BJ (cell line): ENCODE measurements at regions of chr22 and their contacts with region 1.

Region 1: GRCh38 chr22:38214256-38215056 is 12.7 kb downstream of the MAFF start:
- DNase-seq: no peak
- H3K4me3 ChIP-seq: no peak overlapping the region
- H3K27me3 ChIP-seq: no peaks in the 10 kb centered on the region
- CTCF ChIP-seq: no peak

Region 2: GRCh38 chr22:38257181-38257580 is 42.7 kb after region 1 on chr22:
- CTCF ChIA-PET with region 1: no interaction called
- POLR2A ChIA-PET with region 1: interaction called, 18 read pairs
- DNase-seq: peak; percentile 38
- H3K4me3 ChIP-seq: peak overlapping the region; percentile 18; the same call in 1 of the 2 replicates
- H3K27me3 ChIP-seq: no peaks in the 10 kb centered on the region
- CTCF ChIP-seq: no peak